Vagina (tissue), 2 donors: ENCODE measurements at regions of chr13 and their contacts with region 1.

Region 1: DNA sequence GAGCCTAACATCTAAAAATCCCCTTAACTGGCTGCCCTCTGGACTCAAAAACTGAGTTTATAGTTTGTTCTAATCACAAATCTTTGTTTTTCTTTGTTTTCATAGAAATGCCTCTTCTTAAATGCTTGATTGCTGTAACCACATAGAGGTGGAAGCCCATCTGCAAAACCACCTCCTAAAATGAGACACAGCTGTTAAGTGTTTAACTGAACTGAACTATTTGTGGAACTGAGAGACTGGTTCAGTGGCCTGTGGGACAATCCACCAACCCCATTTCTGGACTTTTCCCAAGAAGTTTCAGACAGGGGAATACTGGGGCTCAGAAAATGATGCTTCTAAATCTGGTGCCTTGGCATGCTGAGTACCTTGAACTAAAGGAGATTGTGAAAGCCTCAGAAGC is 50.9 kb upstream of the TM9SF2 start:
- DNase-seq: no peak
- H3K4me3 ChIP-seq: no peak overlapping the region
- H3K27ac ChIP-seq: no peak overlapping the region
- H3K4me1 ChIP-seq: no peaks in the 10 kb centered on the region
- H3K27me3 ChIP-seq: no peaks in the 10 kb centered on the region
- CTCF ChIP-seq: no peak
- POLR2A ChIP-seq: no peak

Region 2: GRCh38 chr13:99464441-99464949 is 14.1 kb after region 1 on chr13:
- intact Hi-C with region 1: no loop called
- DNase-seq: no peak
- H3K4me3 ChIP-seq: no peak overlapping the region
- H3K27ac ChIP-seq: peak overlapping the region; percentile 21
- H3K4me1 ChIP-seq: no peaks in the 10 kb centered on the region
- H3K27me3 ChIP-seq: no peaks in the 10 kb centered on the region
- CTCF ChIP-seq: no peak
- POLR2A ChIP-seq: no peak

Region 3: GRCh38 chr13:100274942-100275506 is 824.6 kb after region 1 on chr13:
- intact Hi-C with region 1: loop called (anchors 5 kb)
- DNase-seq: no peak
- H3K4me3 ChIP-seq: no peak overlapping the region
- H3K27ac ChIP-seq: no peak overlapping the region
- H3K4me1 ChIP-seq: no peaks in the 10 kb centered on the region
- H3K27me3 ChIP-seq: no peaks in the 10 kb centered on the region
- CTCF ChIP-seq: no peak
- POLR2A ChIP-seq: no peak